HEK293 (cell line): ENCODE measurements at regions of chr6 and their contacts with region 1.

Region 1: DNA sequence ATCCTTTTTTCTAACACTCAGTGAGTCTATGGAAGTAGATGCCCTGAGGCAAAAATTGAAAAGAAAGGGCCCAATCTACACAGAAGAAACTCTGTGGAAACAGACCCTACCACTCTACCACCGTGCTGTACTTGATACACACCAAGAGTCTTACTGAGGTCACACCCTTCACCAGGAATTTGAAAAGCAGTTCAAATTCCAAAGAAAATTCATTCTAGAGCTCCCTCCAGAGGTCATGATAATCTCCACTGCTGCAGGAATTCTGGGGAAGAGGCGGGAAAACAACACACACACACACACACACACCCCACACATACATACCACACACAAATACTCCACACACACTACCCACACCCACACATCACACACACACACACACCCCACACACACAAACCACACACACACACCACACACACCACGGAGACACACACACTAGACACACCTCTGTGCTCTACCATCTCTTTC is 336.8 kb downstream of the HDGFL1 start:
- H3K4me3 ChIP-seq: no peak overlapping the region
- H3K27ac ChIP-seq: no peak overlapping the region
- H3K4me1 ChIP-seq: no peaks in the 10 kb centered on the region
- CTCF ChIP-seq: no peak

Region 2: DNA sequence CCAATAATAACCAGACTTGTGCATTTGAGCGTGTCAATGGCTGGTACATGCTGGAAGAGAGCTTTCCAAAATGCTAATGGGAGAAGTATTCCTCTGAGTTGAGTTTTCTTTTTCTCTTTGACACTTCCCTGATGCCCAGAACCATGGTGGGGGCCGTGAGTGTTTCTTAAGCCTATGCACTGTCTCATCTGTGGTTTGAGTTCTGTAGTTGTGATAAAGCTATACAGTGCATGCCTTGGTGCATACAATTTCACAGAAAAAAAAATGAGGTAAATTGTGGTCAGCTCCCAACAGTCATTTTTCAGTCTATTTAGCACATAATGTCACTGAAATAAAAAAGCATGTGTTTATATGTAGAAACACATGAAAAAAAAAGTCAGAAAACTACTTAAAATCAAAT is 132.0 kb before region 1 on chr6:
- CTCF ChIA-PET with region 1: no interaction called
- POLR2A ChIA-PET with region 1: no interaction called
- H3K4me3 ChIP-seq: no peak overlapping the region
- H3K27ac ChIP-seq: no peak overlapping the region
- H3K4me1 ChIP-seq: no peaks in the 10 kb centered on the region
- CTCF ChIP-seq: no peak

Region 3: DNA sequence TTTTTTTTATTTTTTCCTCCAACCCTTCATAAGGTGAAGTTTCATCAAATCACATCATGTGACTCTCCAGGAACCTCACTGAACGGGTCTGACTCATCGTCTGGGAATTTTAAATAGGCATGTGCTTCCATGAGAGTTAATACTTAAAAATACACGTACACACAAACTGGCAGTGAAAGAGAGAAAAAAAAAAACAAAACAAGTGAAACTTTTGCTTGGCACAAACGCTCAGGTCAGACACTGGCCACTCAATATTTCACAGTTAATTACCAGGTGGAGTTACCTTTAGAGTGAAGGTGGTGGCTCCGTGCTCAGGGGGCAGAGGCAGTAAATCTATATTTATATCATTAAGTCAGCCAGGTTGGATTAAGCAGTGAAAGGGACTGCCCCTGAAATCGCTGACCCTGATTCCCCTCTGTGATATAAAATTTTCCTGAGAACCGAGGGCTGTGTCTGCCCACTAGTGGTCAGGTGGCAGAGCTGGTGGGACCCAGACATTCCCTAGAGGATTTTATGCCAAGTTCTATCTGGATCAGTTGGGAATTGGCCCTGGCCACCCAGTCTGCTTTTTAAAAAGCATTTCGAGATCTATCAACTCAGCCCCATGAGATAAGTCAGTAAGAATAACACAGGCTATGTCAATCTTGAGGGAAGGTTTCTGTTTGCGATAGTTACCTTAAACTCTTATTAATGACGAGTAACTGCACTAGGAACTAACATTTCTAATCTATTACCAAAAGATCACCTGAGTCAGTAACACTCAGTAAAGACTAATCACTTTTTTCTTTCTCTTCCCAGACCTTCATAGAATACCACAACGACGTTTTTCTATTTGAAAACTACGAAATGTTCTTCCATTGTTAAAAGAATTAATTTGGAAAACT is 77.7 kb before region 1 on chr6:
- CTCF ChIA-PET with region 1: interaction called, 10 read pairs
- POLR2A ChIA-PET with region 1: no interaction called
- H3K4me3 ChIP-seq: peak overlapping the region; percentile 29
- H3K27ac ChIP-seq: peak overlapping the region; percentile 63
- H3K4me1 ChIP-seq: peaks cover 16% of the 10 kb centered on the region
- CTCF ChIP-seq: 0 out of 2 replicates have a peak, but pooled peaks have one; percentile 16

Region 4: DNA sequence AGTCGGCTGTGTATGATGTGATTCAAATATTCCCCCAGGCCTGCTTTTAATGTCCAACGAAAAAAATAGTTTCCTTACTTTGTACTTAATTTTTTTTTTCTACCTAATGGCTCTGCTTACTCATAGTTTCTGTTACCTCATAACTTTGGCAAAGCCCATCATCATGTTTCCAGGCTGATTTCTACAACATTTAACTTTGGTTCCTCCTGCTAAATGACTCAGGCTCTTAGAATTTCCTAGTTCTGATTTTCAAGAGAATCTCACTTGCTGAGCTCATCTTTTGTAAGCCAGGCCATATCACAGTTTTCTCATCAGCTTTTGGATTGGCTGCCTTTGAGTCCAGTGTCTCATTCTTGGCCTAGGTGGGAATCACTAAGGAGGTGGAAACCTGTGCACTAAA is 13.7 kb before region 1 on chr6:
- CTCF ChIA-PET with region 1: interaction called, 12 read pairs
- POLR2A ChIA-PET with region 1: no interaction called
- H3K4me3 ChIP-seq: no peak overlapping the region
- H3K27ac ChIP-seq: no peak overlapping the region
- H3K4me1 ChIP-seq: peaks cover 8% of the 10 kb centered on the region
- CTCF ChIP-seq: no peak

Region 5: GRCh38 chr6:22926790-22927354 is 20.7 kb after region 1 on chr6:
- CTCF ChIA-PET with region 1: no interaction called
- POLR2A ChIA-PET with region 1: no interaction called
- H3K4me3 ChIP-seq: no peak overlapping the region
- H3K27ac ChIP-seq: no peak overlapping the region
- H3K4me1 ChIP-seq: no peaks in the 10 kb centered on the region
- CTCF ChIP-seq: no peak

Region 6: DNA sequence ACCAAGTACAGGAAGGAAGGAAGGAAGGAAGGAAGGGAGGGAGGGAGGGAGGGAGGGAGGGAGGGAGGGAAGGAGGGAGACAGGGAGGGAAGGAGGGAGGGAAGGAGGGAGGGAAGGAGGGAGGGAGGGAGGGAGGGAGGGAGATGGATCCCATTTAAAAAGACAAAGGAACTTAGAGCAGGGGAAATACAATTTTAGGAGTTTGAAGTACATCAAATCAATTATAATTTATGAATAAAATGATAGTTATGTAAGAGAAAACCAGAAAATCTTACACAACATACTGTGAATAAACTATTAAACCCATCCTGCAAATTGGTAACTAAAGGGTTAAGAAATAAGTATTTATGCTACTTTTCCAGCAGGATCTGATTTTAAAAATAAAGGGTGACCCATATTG is 139.2 kb after region 1 on chr6:
- CTCF ChIA-PET with region 1: no interaction called
- POLR2A ChIA-PET with region 1: no interaction called
- H3K4me3 ChIP-seq: no peak overlapping the region
- H3K27ac ChIP-seq: no peak overlapping the region
- H3K4me1 ChIP-seq: no peaks in the 10 kb centered on the region
- CTCF ChIP-seq: no peak

Region 7: GRCh38 chr6:23940466-23940865 is 1034.3 kb after region 1 on chr6:
- CTCF ChIA-PET with region 1: no interaction called
- POLR2A ChIA-PET with region 1: no interaction called
- H3K4me3 ChIP-seq: no peak overlapping the region
- H3K27ac ChIP-seq: no peak overlapping the region
- H3K4me1 ChIP-seq: no peaks in the 10 kb centered on the region
- CTCF ChIP-seq: no peak